MCF 10A (cell line): ENCODE measurements at regions of chr13 and their contacts with region 1.

Region 1: GRCh38 chr13:46126552-46127357 is 21.9 kb upstream of the CPB2 start:
- DNase-seq: peak; percentile 87
- H3K4me3 Mint-ChIP-seq: no peak overlapping the region
- H3K27ac Mint-ChIP-seq: no peak overlapping the region
- H3K4me1 Mint-ChIP-seq: peaks cover 6% of the 10 kb centered on the region
- H3K27me3 Mint-ChIP-seq: peaks cover 29% of the 10 kb centered on the region
- CTCF ChIP-seq: peak; percentile 88

Region 2: GRCh38 chr13:45925151-45925550 is 201.6 kb before region 1 on chr13:
- CTCF ChIA-PET with region 1: no interaction called
- POLR2A ChIA-PET with region 1: no interaction called
- intact Hi-C with region 1: loop called (anchors 5 kb)
- DNase-seq: peak; percentile 13
- H3K4me3 Mint-ChIP-seq: no peak overlapping the region
- H3K27ac Mint-ChIP-seq: no peak overlapping the region
- H3K4me1 Mint-ChIP-seq: peaks cover 6% of the 10 kb centered on the region
- H3K27me3 Mint-ChIP-seq: peaks cover 50% of the 10 kb centered on the region
- CTCF ChIP-seq: no peak

Region 3: GRCh38 chr13:46052319-46053161 is 74.2 kb before region 1 on chr13 and contains the start of gene ZC3H13:
- CTCF ChIA-PET with region 1: interaction called, 7 read pairs
- POLR2A ChIA-PET with region 1: interaction called, 14 read pairs
- intact Hi-C with region 1: loop called (anchors 1 kb)
- DNase-seq: peak; percentile 97
- H3K4me3 Mint-ChIP-seq: peak within 1 kb of the TSS; percentile 92
- H3K27ac Mint-ChIP-seq: peak within 1 kb of the TSS; percentile 99
- H3K4me1 Mint-ChIP-seq: peaks cover 20% of the 10 kb centered on the region
- H3K27me3 Mint-ChIP-seq: no peaks in the 10 kb centered on the region
- CTCF ChIP-seq: peak; percentile 20
- total RNA-seq, gene ZC3H13: 33.9 and 39.0 TPM in 2 replicates